Body of pancreas (tissue), 4 donors: ENCODE measurements at regions of chr10 and their contacts with region 1.

Region 1: GRCh38 chr10:931416-932318 is at the start of gene LARP4B:
- DNase-seq: peak; percentile 97
- ATAC-seq: peak; percentile 99
- H3K4me3 ChIP-seq: peak within 1 kb of the TSS; percentile 77 to 88
- H3K27ac ChIP-seq: peak within 1 kb of the TSS; percentile 91 to 96 (median 92)
- H3K4me1 ChIP-seq: peaks cover 35% of the 10 kb centered on the region
- H3K27me3 ChIP-seq: no peaks in the 10 kb centered on the region
- CTCF ChIP-seq: no peak
- POLR2A ChIP-seq: peak; percentile 60 to 80 (median 74)
- total RNA-seq, gene LARP4B: 41.0 to 61.6 TPM

Region 2: DNA sequence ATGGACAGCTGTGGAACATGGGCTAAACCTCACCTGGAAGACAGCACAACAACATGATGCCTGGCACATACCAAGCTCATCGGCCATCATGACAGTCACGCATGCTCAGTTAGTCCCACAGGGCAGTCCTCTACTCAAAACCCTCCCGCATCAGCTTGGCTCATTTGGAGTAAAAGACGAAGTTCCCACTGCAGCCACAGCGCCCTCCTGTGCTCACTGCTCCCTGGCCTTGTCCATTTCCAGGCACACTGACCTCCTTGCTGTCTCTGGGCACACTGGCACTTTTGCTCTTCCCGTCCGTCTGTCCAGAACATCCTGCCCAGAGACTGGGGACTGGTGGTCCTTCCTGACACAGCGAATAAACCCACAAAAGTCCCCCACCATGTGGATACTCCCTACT is 66.4 kb before region 1 on chr10:
- intact Hi-C with region 1: no loop called
- DNase-seq: no peak
- ATAC-seq: no peak
- H3K4me3 ChIP-seq: no peak overlapping the region
- H3K27ac ChIP-seq: no peak overlapping the region
- H3K4me1 ChIP-seq: peaks cover 9% of the 10 kb centered on the region
- H3K27me3 ChIP-seq: no peaks in the 10 kb centered on the region
- CTCF ChIP-seq: no peak
- POLR2A ChIP-seq: no peak

Region 3: DNA sequence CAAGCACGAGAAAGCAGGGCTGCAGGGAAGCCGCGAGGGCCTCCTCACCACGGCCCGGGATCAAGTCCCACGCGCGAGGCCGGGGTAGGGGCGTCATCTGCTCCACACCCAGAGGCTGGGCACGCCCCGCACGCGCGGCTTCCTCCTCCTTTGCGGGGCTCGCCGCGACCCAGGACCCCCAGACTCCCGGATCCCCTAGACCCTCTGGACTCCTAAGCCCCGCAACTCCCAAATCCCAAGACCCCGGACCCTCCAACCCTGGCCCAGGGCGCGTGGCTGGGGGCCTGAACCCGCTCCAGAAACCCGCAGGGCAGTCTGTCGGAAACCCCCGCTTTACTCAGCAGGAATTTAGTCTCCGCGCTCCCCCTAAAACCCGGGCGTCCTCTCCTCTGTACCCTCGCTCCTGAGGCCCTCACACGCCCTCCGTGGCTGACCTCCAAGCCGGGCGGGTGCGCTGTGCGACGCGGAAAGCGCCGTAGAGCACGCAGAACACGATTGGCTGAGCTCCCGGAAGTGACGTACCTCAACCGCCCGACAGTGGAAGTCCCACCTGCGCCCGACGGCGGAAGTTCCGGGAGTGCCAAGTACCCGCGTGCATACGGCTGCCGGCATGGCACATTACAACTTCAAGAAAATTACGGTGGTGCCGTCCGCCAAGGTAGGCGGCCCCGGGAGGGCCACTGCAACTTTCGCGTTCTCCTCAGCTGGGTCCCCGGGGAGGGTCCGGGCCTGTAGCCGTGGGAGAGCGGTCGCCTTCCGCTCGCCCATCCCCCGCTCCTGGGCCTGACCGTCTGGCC is 56.4 kb after region 1 on chr10 and contains the start of gene GTPBP4:
- intact Hi-C with region 1: loop called (anchors 10 kb)
- DNase-seq: peak; percentile 99
- ATAC-seq: peak; percentile 99
- H3K4me3 ChIP-seq: peak within 1 kb of the TSS; percentile 88 to 100
- H3K27ac ChIP-seq: peak within 1 kb of the TSS; percentile 80 to 92 (median 87)
- H3K4me1 ChIP-seq: peaks cover 25% of the 10 kb centered on the region
- H3K27me3 ChIP-seq: no peaks in the 10 kb centered on the region
- CTCF ChIP-seq: peak in 1 of 7 experiments; percentile 48
- POLR2A ChIP-seq: peak; percentile 65 to 87 (median 86)
- total RNA-seq, gene GTPBP4: 8.3 to 20.4 TPM

Region 4: DNA sequence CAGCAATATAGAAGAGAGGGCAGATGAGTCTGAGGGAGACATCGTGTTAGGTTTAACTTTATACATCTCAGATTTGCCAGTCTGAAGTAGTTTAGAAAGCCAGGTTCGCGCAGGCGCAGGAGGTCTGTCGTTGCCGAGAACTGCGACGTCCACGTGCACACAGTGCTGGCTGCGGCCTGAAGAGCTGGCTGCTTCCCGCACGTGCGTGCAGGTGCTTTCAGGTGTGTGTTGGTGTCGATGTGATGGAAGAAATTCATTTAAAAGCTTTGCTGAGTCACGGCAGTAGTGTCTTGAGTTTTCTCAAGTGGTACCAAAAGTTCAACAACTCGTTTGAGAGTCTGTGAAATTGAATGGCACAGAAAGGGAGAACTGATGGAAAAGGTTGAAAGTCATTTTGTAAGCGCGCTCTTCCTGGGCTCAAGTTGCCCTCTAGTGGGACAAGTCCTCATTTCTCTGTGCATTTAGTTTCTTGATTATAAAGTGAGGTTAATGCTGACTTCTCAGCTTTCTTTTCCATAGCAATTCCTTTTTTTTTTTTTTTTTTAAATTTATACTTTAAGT is 143.2 kb after region 1 on chr10:
- intact Hi-C with region 1: no loop called
- DNase-seq: no peak
- ATAC-seq: no peak
- H3K4me3 ChIP-seq: no peak overlapping the region
- H3K27ac ChIP-seq: no peak overlapping the region
- H3K4me1 ChIP-seq: no peaks in the 10 kb centered on the region
- H3K27me3 ChIP-seq: no peaks in the 10 kb centered on the region
- CTCF ChIP-seq: peak in 1 of 7 experiments; percentile 9
- POLR2A ChIP-seq: no peak